Activated T-helper 2 cell treated with anti-CD3 and anti-CD28 coated beads, Interferon-gamma antibody, Interleukin-2, Interleukin-4, amounts not matched to agents 10 μg/mL and 5 μg/mL and 100 μg/mL, durations not matched to agents 14 hours and 24 hours and 36 hours (primary cell): ENCODE measurements at regions of chr1 and their contacts with region 1.

Region 1: GRCh38 chr1:84573967-84574842 is at the start of gene CTBS:
- DNase-seq: peak; percentile 76
- H3K4me3 Mint-ChIP-seq: peak within 1 kb of the TSS; percentile 97
- H3K27ac Mint-ChIP-seq: peak within 1 kb of the TSS; percentile 100
- H3K4me1 Mint-ChIP-seq: peaks cover 50% of the 10 kb centered on the region
- H3K27me3 Mint-ChIP-seq: no peaks in the 10 kb centered on the region
- total RNA-seq, gene CTBS: 14.1 and 15.1 TPM in 2 replicates

Region 2: DNA sequence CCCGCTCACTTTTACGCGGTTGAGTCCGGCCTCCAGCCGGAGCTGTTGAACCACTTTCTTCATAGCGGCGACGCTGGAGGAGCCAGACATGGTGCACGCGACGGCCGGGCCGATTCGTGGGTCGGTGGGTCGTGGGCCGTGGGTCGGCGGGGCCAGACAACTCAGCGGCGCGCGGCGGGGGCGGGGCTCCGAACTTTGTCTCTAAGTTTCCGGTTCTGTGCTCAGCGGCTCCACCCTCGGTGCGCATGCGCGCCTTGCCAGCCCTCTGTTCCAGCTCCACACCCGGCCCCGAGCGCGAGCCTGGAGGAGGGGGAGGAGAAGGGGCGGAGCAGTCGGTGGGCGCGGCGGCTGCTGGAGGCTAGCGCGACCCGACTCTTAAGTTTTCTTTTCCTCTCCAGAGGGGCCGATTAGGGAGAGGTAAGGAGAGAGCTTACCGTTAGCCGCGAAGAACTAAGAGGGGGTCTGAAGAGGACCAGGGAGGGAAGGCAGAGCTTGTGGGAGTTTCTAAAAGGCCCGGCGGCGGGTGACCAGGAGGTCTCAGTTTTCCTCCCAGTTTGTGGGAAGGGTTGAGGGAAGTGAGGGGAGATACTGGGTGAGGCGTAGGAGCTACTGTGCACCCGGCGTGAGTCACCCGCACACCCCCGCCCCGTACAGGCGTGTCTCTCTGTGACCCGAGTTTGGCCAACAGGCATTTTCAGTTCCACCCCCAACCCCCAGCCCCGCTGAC is 68.0 kb before region 1 on chr1 and contains the starts of genes GNG5 and SPATA1:
- intact Hi-C with region 1: loop called (anchors 1 kb)
- DNase-seq: peak; percentile 97
- H3K4me3 Mint-ChIP-seq: peak within 1 kb of the TSS; percentile 100
- H3K27ac Mint-ChIP-seq: peak within 1 kb of the TSS; percentile 99
- H3K4me1 Mint-ChIP-seq: peaks cover 26% of the 10 kb centered on the region
- H3K27me3 Mint-ChIP-seq: no peaks in the 10 kb centered on the region
- total RNA-seq, gene GNG5: 118 and 126 TPM in 2 replicates
- total RNA-seq, gene SPATA1: 1.4 and 1.5 TPM in 2 replicates

Region 3: DNA sequence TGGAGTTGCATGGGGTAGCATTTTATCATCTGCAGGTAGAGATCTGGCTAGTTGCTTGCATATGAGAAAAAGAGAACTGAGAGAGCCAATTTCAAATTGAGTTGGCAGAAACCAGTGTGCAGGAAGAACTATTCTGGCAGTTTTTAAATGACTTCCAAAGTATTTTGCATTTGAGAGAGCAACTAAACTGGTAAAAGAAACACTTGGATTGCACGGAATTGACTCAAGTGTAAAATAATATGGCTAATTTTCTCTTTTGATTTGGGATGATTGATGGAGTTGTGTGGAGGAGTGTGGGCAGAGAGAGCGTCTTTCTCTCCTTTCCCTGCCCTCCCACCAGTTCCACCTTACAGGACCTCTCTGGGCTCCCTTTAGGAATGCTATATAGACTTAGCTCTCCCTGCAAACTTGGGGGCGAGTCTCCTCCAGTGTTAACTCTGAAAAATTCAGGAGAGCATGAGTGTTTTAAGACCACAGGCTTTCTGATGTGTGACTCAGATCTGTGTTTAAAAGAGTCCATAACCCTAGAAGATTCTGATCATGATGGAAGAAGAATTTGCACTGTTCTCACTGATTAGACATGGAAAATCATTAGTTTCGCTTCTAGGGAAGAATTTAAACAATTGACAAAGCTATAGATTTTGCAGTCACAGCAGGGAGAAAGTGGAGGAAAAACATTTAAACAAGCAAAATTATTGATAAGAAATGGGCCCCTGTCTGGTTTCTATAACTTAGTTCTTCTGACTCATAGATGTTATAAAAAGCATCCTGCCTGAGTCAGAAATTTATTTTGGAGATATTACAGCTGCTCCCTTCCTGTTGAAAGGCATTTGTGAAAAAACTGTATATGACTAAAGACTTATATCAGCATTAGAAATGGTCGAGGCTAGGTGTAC is 24.9 kb after region 1 on chr1:
- intact Hi-C with region 1: loop called (anchors 1 kb)
- DNase-seq: no peak
- H3K4me3 Mint-ChIP-seq: no peak overlapping the region
- H3K27ac Mint-ChIP-seq: peak overlapping the region; percentile 80
- H3K4me1 Mint-ChIP-seq: peaks cover 25% of the 10 kb centered on the region
- H3K27me3 Mint-ChIP-seq: no peaks in the 10 kb centered on the region

Region 4: GRCh38 chr1:84644472-84644871 is 70.3 kb after region 1 on chr1:
- intact Hi-C with region 1: no loop called
- DNase-seq: no peak
- H3K4me3 Mint-ChIP-seq: no peak overlapping the region
- H3K27ac Mint-ChIP-seq: no peak overlapping the region
- H3K4me1 Mint-ChIP-seq: peaks cover 1% of the 10 kb centered on the region
- H3K27me3 Mint-ChIP-seq: no peaks in the 10 kb centered on the region

Region 5: DNA sequence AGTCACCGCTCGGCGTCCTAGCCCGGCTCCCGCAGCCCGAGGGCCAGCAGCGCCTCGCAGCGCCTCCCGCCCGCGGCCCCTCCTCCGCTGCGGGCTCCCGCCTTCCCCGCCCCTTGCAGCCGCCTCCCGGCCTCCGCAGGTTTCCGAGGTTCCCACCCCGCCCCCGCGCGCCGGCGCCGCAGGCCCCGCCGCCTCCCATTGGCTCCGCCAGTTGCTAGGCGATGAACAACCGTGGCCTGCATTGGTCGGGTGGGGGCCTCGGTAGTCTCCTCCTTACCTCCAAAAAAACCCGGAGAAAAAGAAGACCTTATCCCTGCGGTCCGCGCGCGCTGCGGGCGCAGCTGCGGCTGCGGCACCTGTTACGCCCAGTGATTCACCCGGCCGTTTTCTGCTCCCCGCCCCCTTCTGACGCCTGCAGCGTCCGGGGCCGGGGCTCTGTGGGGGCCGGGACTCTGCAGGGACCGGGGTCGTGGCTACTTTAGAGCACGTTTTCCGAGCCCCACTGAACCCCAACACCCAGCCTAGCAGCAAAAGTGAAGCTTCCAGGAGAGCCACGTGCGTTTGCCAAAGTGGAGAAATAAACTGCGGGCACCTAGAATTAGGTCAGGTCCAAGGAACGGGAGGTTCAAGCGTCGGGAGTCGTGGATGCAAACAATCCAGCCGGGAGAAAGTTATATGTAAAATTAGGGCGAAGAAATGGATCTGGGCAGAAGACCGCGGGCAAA is 116.4 kb after region 1 on chr1 and contains the start of gene SSX2IP:
- intact Hi-C with region 1: loop called (anchors 1 kb)
- DNase-seq: peak; percentile 98
- H3K4me3 Mint-ChIP-seq: peak within 1 kb of the TSS; percentile 94
- H3K27ac Mint-ChIP-seq: peak within 1 kb of the TSS; percentile 94
- H3K4me1 Mint-ChIP-seq: peaks cover 46% of the 10 kb centered on the region
- H3K27me3 Mint-ChIP-seq: no peaks in the 10 kb centered on the region
- total RNA-seq, gene SSX2IP: 12.1 and 13.0 TPM in 2 replicates

Region 6: DNA sequence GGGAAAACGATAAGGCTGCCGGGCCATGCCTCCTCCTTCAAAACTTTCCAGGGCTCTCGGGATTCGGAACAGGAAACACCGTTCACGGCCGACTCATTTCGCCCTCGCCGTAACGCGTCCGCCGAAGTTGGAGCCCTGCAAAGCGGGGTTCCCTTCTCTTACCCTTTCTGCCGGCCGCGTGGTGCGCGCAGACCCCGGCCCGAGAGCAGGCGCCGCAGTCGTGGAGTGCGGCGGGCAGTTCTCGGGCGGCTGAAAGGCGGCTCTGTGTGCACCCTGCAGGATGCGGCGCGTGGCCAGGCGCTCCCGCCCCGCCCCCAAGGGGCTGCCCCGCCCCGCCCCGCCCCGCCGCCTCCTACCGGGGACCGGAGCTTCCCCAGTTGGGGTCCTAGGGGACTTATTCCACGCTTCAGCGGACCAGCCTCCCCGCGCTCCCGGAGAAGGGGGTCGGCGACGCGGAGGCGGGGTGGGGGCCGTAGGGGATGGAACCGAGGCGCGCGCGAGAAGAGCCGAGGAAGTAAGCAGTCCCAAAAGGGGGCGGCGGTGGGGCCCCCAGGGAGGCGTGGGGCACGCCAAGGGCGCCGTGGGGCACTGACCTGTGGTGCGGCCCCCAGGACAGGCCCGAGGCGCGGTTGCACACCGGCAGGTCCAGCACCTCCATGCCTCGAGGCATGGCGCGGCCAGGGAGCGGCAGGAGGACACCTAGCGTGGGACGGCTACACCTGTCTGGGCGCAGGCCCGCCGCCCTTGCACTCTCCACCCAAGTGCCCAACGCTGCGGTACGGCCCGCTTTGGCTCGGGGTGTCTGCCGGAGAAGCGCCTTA is 422.9 kb after region 1 on chr1 and contains the start of gene MCOLN2:
- intact Hi-C with region 1: loop called (anchors 10 kb)
- DNase-seq: peak; percentile 52
- H3K4me3 Mint-ChIP-seq: peak within 1 kb of the TSS; percentile 94
- H3K27ac Mint-ChIP-seq: peak within 1 kb of the TSS; percentile 93
- H3K4me1 Mint-ChIP-seq: peaks cover 52% of the 10 kb centered on the region
- H3K27me3 Mint-ChIP-seq: peaks cover 28% of the 10 kb centered on the region
- total RNA-seq, gene MCOLN2: 142 and 143 TPM in 2 replicates

Region 7: DNA sequence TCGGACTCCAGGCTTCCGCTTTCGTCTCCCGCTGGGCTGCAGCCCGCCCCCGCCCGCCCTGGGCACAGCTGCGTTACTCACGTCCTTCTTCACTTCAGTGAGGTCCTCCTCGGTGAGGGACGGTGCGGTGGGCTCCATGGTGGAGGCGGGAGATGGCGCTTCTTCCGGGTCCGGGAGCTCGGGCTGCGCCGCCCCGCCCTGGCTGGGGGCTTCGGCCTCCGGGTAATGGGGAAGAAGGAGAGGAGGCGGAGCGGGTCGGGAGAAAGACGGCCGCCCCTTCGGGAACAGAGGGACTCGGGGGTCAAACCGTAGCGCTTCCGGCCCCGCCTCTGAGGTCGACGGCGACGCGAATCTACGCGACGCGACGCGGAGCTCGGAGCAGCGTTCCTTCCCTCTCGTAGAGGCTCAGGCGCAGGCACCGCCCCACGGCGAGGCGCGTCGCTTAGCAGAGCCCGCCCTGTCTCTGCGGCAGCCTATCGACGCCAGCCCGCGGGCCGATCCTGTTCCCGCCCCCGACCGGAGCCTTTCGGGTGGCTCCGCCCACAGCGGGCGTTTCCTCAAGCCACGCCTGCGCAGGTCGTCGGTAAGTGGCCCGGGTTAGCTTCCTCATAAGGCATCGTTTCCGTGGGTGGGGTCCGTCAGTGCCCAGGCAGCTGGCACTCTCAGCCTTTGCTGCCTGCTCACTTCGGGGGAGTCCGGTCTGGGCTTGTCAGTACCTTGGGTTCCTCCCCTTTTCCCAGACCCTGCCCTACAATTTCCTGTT is 702.2 kb after region 1 on chr1 and contains the start of gene BCL10:
- intact Hi-C with region 1: loop called (anchors 5 kb)
- DNase-seq: peak; percentile 98
- H3K4me3 Mint-ChIP-seq: peak within 1 kb of the TSS; percentile 83
- H3K27ac Mint-ChIP-seq: peak within 1 kb of the TSS; percentile 87
- H3K4me1 Mint-ChIP-seq: peaks cover 47% of the 10 kb centered on the region
- H3K27me3 Mint-ChIP-seq: peaks cover 12% of the 10 kb centered on the region
- total RNA-seq, gene BCL10: 24.4 and 27.4 TPM in 2 replicates